ENCODE measurements at regions of chr16 and their contacts with region 1.

Region 1: DNA sequence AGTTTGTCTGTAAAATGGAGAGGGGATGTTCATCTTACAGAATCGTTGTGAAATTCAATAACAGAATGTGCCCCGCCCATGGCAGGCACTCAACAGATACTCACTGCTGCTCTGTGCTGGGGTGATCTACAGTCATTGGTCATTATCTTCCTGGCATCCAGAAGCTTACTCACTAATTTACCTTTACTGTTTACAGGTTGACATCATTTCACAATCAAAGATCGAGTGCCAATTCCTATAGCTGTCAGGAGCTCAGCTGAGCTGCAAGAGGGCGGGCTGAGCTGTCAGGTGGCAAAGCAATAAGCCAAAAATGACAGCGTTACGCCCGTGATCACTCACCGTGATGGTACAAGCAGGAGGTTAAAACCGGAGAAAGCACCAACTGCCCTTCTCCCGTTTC is 51.2 kb downstream of the LITAF start:
- DNase-seq: no peak
- ATAC-seq: no peak
- H3K4me3 ChIP-seq: no peak overlapping the region
- H3K27ac ChIP-seq: no peak overlapping the region
- H3K4me1 ChIP-seq: no peaks in the 10 kb centered on the region
- H3K27me3 ChIP-seq: no peaks in the 10 kb centered on the region
- CTCF ChIP-seq: no peak

Region 2: GRCh38 chr16:11361701-11362451 is 173.6 kb before region 1 on chr16:
- CTCF ChIA-PET with region 1: no interaction called
- POLR2A ChIA-PET with region 1: interaction called, 13 read pairs
- in situ Hi-C with region 1: no loop called
- intact Hi-C with region 1: no loop called
- DNase-seq: no peak
- ATAC-seq: no peak
- H3K4me3 ChIP-seq: no peak overlapping the region
- H3K27ac ChIP-seq: no peak overlapping the region
- H3K4me1 ChIP-seq: no peaks in the 10 kb centered on the region; the same call in 1 of the 2 replicates
- H3K27me3 ChIP-seq: no peaks in the 10 kb centered on the region
- CTCF ChIP-seq: no peak

Region 3: GRCh38 chr16:11639925-11640899 is 104.7 kb after region 1 on chr16:
- CTCF ChIA-PET with region 1: interaction called, 4 read pairs
- POLR2A ChIA-PET with region 1: no interaction called
- in situ Hi-C with region 1: no loop called
- intact Hi-C with region 1: loop called (anchors 5 kb)
- DNase-seq: peak; percentile 93
- ATAC-seq: peak; percentile 67
- H3K4me3 ChIP-seq: no peak overlapping the region
- H3K27ac ChIP-seq: no peak overlapping the region; the same call in 1 of the 2 replicates
- H3K4me1 ChIP-seq: peaks cover 11% of the 10 kb centered on the region
- H3K27me3 ChIP-seq: no peaks in the 10 kb centered on the region
- CTCF ChIP-seq: no peak

Region 4: DNA sequence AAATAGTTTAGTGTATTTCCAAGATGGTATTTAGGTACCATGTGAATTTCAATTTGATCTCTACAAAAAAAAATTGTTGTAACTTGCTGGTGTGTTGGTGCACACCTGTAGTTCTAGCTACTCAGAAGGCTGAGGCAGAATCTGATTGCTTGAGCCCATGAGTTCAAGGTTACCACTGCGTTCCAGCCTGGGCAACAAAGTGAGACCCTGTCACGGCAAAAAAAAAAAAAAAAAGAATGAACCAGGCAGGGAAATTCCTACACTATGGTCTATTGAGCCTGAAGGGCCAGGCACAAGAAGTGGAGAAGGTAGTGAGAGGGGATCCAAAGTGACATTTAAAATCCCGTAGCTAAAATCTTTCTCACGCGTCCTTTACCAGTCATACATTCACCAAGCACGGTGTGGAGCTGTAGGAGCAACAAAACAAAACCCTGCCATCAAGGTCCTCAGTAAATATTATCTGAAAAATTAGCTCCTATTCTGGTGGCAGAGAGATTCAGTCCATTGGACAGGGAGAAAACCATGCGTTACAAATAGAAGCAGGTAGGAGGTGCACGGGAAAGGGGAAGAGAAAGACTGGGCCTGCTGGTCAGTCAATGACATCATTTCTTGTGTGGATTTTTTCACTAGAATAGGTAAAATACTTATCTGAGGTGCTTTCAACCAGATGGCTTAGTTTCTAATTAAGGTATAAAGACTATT is 179.9 kb after region 1 on chr16:
- CTCF ChIA-PET with region 1: interaction called, 8 read pairs
- POLR2A ChIA-PET with region 1: no interaction called
- in situ Hi-C with region 1: no loop called
- intact Hi-C with region 1: loop called (anchors 2 kb)
- DNase-seq: no peak
- ATAC-seq: no peak
- H3K4me3 ChIP-seq: no peak overlapping the region
- H3K27ac ChIP-seq: no peak overlapping the region
- H3K4me1 ChIP-seq: no peaks in the 10 kb centered on the region
- H3K27me3 ChIP-seq: no peaks in the 10 kb centered on the region
- CTCF ChIP-seq: no peak

Measured in Panc1 (cell line).